ENCODE measurements at regions of chr14 and their contacts with region 1.

Region 1: DNA sequence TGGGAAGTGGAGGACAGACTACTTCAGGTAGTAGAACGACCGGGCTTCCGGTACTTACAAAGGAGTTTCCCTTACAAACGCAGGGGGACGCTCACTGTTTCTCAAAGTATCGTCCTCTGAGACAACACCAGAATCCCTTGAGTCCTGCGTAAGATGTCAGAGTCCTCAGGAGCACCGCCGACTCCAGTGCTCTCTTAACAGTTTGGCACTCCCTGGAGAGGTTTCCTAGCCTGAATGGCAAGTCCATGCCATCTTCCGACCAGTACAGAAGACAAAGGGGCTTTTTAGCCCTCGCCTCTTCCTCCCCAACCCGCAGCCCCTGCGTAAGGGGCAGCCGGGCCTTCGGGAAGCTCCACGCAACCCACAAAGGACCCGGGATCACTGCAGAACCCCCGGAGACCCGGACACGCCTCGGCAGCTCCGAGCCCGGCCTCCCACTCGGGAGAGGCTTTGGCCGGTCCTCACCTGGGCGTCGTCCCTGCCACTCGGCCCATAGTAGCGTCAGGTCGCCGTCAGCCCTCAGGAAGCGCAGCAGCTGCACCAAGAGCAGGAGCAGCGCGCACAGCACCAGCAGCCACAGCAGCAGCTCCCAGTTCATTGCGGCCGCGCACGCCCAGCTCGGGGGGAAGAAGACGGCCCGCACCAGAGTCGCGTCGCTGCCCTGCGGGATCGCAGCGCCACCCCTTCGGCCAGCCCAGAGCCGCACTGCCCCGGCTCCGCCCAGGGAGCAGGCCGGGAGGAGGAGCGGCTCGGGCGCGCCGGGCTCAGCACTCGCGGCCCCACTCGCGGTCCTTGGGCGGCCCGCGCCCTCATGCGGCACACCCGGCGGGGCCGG is at the start of gene DHRS7:
- DNase-seq: peak; percentile 91
- H3K4me3 ChIP-seq: peak within 1 kb of the TSS; percentile 65 to 84 (median 77)
- H3K27ac ChIP-seq: peak within 1 kb of the TSS; percentile 86 to 97 (median 92)
- H3K4me1 ChIP-seq: peaks cover 0 to 25% (median 19%) of the 10 kb centered on the region in 4 donors
- H3K27me3 ChIP-seq: no peaks in the 10 kb centered on the region
- CTCF ChIP-seq: peak in 1 of 4 experiments; percentile 64
- EP300 ChIP-seq: no peak
- POLR2A ChIP-seq: peak; percentile 27 to 55
- total RNA-seq, gene DHRS7: 43.7 to 70.9 (median 59.7) TPM

Region 2: GRCh38 chr14:59964251-59965007 is 200.5 kb before region 1 on chr14:
- intact Hi-C with region 1: loop called (anchors 5 kb)
- DNase-seq: no peak
- H3K4me3 ChIP-seq: no peak overlapping the region
- H3K27ac ChIP-seq: no peak overlapping the region
- H3K4me1 ChIP-seq: no peaks in the 10 kb centered on the region
- H3K27me3 ChIP-seq: no peaks in the 10 kb centered on the region
- CTCF ChIP-seq: no peak
- EP300 ChIP-seq: no peak
- POLR2A ChIP-seq: no peak

Region 3: DNA sequence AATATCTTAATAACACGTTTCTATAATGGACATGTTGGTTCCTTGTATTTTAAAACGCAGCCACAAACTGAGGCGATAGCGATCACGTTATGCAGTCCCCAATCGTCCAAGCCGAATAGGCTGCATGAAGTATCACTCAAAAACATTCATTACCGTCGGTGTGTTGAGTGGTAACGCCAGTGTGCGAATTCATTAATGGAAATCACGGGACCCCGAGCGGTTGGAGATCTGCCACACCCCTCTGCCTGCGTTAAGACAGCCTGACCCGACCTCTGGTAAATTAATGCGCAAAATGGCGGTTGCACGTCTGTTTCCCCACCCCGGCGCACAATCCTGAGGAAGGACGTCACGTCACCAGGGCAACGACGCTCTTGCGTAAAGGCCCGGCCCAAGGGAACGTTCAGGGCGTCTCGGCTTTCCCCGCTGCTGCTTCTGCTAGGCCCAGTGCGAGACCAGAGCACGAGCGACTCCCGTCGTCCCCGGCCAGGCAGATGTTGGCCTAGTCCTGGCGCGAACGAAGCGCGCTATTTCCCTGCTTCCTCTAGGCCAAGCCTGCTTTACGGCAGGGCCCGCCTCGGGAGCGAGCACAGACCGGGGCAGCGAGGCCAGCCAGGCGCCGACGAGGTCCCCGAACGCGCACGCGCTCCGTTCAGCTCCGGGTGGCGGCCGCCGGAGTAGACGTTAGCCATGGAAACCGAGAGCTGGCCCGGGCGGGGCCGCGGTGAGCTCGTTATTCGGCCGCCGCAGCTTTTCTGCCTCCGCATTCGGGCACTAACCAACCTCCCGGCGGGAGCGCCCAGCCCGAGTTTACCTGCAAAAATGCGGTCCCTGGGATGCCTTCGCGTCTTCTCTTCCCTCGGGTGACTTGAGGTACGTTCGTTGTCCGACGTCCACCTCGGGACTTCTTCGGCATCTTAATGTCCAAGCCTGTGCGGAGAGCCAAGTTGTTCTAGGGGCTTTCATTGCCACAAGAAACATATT is 73.1 kb before region 1 on chr14 and contains the start of gene PCNX4:
- intact Hi-C with region 1: loop called (anchors 1 kb)
- DNase-seq: peak; percentile 99
- H3K4me3 ChIP-seq: peak within 1 kb of the TSS; percentile 58 to 65 (median 62)
- H3K27ac ChIP-seq: peak within 1 kb of the TSS; percentile 94 to 97 (median 95)
- H3K4me1 ChIP-seq: peaks cover 0 to 32% (median 25%) of the 10 kb centered on the region in 4 donors
- H3K27me3 ChIP-seq: no peaks in the 10 kb centered on the region
- CTCF ChIP-seq: no peak
- EP300 ChIP-seq: peak; percentile 38 to 87 (median 74)
- POLR2A ChIP-seq: peak; percentile 77 to 78
- total RNA-seq, gene PCNX4: 43.8 to 55.9 (median 44.3) TPM

Region 4: GRCh38 chr14:60179431-60179869 is 14.5 kb after region 1 on chr14:
- intact Hi-C with region 1: no loop called
- DNase-seq: no peak
- H3K4me3 ChIP-seq: no peak overlapping the region
- H3K27ac ChIP-seq: peak overlapping the region in 2 of 4 donors; percentile 52 to 66
- H3K4me1 ChIP-seq: peaks cover 0 to 24% (median 12%) of the 10 kb centered on the region in 4 donors
- H3K27me3 ChIP-seq: no peaks in the 10 kb centered on the region
- CTCF ChIP-seq: no peak
- EP300 ChIP-seq: peak in 1 of 4 donors; percentile 65
- POLR2A ChIP-seq: no peak

Measured in sigmoid colon (tissue), 7 donors.